CD4-positive, alpha-beta memory T cell (primary cell): ENCODE measurements at regions of chr3 and their contacts with region 1.

Region 1: GRCh38 chr3:4712143-4712542 is 219.0 kb downstream of the ITPR1 start:
- DNase-seq: no peak
- H3K4me3 ChIP-seq: no peak overlapping the region
- H3K4me3 Mint-ChIP-seq: no peak overlapping the region
- H3K27ac ChIP-seq: no peak overlapping the region
- H3K27ac Mint-ChIP-seq: no peak overlapping the region
- H3K4me1 ChIP-seq: no peaks in the 10 kb centered on the region
- H3K4me1 Mint-ChIP-seq: peaks cover 0 to 5% (median under 1%) of the 10 kb centered on the region in 4 donors
- H3K27me3 ChIP-seq: no peaks in the 10 kb centered on the region
- H3K27me3 Mint-ChIP-seq: no peaks in the 10 kb centered on the region

Region 2: DNA sequence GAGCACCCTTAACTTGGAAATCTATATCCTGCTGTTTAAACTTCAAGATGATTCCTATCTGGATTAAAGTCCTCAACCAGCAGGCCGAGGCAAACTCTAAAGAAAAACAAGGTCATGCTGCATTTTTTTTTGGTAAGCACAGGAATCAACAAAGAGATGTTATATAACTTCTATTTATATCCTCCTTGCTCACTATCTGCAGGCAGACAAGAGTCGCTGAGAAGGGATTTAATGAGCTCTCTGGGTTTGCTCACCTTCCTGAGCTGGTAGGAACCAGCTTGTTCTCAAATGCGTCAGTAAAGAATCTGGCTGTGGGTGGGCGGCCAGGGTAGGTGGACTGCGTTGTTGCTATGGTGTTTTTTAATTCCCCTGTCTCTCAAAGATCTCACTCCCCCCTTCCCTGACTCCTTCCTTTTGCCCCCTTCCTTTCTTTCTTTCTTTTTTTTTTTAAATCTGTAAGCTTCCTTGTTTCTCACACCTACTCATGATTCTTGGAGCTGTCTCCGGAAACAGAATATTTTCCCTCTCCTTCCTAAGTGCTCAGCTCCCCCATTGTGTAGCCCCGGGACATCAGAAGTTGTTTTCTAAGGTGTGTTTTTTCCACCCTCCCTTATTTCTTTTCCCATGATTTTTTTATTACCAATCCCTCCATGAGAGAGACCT is 38.3 kb after region 1 on chr3:
- CTCF ChIA-PET with region 1: interaction called, 12 read pairs
- POLR2A ChIA-PET with region 1: no interaction called
- intact Hi-C with region 1: no loop called
- DNase-seq: peak; percentile 34 to 79 (median 68)
- H3K4me3 ChIP-seq: no peak overlapping the region
- H3K4me3 Mint-ChIP-seq: peak overlapping the region in 7 of 8 donors; percentile 14 to 76 (median 44)
- H3K27ac ChIP-seq: peak overlapping the region; percentile 50
- H3K27ac Mint-ChIP-seq: peak overlapping the region; percentile 75 to 96 (median 95)
- H3K4me1 ChIP-seq: peaks cover 27% of the 10 kb centered on the region
- H3K4me1 Mint-ChIP-seq: peaks cover 18 to 48% (median 27%) of the 10 kb centered on the region in 4 donors
- H3K27me3 ChIP-seq: no peaks in the 10 kb centered on the region
- H3K27me3 Mint-ChIP-seq: no peaks in the 10 kb centered on the region

Region 3: GRCh38 chr3:4826237-4827100 is 114.3 kb after region 1 on chr3:
- CTCF ChIA-PET with region 1: interaction called, 19 read pairs
- POLR2A ChIA-PET with region 1: no interaction called
- intact Hi-C with region 1: loop called (anchors 5 kb)
- DNase-seq: no peak
- H3K4me3 ChIP-seq: peak overlapping the region; percentile 4 to 39
- H3K4me3 Mint-ChIP-seq: peak overlapping the region; percentile 74 to 94 (median 88)
- H3K27ac ChIP-seq: peak overlapping the region; percentile 33
- H3K27ac Mint-ChIP-seq: peak overlapping the region; percentile 88 to 98 (median 96)
- H3K4me1 ChIP-seq: peaks cover 99% of the 10 kb centered on the region
- H3K4me1 Mint-ChIP-seq: peaks cover 77 to 97% (median 93%) of the 10 kb centered on the region in 4 donors
- H3K27me3 ChIP-seq: no peaks in the 10 kb centered on the region
- H3K27me3 Mint-ChIP-seq: peaks cover 0 to 3% of the 10 kb centered on the region in 2 donors

Region 4: DNA sequence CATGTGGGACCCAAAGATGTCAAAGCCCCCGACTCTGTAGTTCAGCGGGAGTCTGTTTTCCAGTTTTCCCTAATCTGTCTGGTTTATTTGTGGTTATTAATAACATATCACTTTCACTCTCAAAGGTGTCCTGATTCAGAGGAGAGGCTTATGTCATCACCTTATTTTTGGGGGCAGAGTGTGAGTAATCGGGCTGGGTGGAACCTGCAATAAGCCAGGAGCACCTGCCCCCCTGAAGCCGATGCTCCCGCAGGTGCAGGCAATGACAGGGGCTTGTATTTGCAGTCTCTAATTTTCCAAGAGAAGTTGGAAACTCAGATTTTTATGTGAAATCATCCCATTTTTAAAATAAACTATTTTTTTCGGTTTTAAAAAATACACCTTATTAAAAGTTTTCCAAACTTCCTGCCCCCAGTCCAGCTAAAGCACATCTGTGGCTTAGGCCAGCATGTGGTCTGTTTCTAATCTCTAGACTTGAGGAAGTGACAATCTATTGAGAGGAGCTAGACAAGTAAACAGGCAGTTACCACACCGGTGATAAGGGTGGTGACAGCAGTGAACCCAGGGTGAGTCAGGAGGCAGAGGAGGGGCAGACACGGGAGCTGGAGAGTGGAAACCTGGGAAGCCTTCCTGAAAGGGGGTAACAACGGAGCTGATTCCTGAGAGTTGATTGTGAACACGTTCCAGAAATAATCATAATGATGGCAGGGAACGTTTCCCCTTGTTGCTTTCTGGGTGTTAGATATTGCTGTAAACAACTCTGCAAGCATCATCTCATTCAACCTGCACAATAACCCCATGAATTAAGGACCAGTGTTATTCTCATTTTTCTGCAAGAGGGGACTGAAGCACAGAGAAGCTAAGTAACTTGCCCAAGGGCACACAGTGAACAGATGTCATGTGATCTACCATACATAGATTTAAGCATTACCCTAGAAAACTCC is 304.3 kb after region 1 on chr3:
- CTCF ChIA-PET with region 1: interaction called, 221 read pairs
- POLR2A ChIA-PET with region 1: interaction called, 3 read pairs
- intact Hi-C with region 1: no loop called
- DNase-seq: peak; percentile 32 to 78 (median 48)
- H3K4me3 ChIP-seq: no peak overlapping the region
- H3K4me3 Mint-ChIP-seq: peak overlapping the region; percentile 1 to 76 (median 61)
- H3K27ac ChIP-seq: no peak overlapping the region
- H3K27ac Mint-ChIP-seq: peak overlapping the region; percentile 82 to 97 (median 91)
- H3K4me1 ChIP-seq: peaks cover 71% of the 10 kb centered on the region
- H3K4me1 Mint-ChIP-seq: peaks cover 51 to 82% (median 67%) of the 10 kb centered on the region in 4 donors
- H3K27me3 ChIP-seq: no peaks in the 10 kb centered on the region
- H3K27me3 Mint-ChIP-seq: no peaks in the 10 kb centered on the region

Region 5: DNA sequence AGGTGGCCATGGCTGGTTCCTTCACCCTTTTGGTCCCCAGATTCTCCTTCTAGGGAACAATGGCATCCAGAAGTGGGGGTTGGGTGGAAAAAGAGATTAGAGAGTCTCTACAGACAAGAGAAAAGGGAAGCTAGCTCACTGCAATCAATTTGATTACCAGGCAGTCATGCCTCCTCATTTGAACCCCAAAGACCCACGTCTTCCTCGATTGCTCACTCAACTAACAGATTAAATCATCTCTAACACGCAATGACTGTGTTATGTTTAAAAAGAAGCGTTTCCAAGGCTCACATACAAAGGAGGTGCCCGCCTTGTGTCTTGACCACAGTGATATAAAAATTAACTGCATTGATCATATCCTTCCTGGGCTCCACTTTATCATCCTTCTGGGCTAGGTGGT is 324.7 kb after region 1 on chr3:
- CTCF ChIA-PET with region 1: interaction called, 221 read pairs
- POLR2A ChIA-PET with region 1: no interaction called
- intact Hi-C with region 1: no loop called
- DNase-seq: no peak
- H3K4me3 ChIP-seq: no peak overlapping the region
- H3K4me3 Mint-ChIP-seq: no peak overlapping the region
- H3K27ac ChIP-seq: no peak overlapping the region
- H3K27ac Mint-ChIP-seq: no peak overlapping the region
- H3K4me1 ChIP-seq: no peaks in the 10 kb centered on the region
- H3K4me1 Mint-ChIP-seq: peaks cover 0 to 3% (median 0%) of the 10 kb centered on the region in 4 donors
- H3K27me3 ChIP-seq: no peaks in the 10 kb centered on the region
- H3K27me3 Mint-ChIP-seq: no peaks in the 10 kb centered on the region

Region 6: DNA sequence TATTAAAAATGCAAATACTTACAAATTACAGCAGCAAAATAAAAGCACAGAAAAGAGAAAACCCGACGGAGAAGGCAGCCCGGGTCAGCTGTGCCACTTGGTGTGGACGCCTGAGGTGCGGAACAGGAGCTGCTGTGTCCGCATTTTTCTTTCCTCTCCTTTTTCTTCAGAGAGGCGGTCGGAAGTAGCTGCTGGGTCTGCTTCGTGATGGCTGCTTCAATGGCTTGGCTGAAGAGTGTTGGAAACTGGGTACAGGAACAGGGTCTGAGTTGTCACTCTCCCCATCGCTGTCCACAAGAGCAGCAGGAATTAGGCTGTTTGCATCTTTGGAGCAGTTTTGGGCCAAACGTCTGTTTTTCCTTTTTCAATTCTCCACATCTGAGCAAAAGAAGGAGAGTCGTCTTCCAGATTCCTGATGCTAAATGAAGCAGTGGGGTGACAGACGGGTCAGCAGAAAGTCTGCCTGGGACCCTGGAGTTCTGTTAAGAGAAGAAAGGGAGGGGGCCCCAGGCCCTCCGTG is 356.4 kb after region 1 on chr3:
- CTCF ChIA-PET with region 1: interaction called, 18 read pairs
- POLR2A ChIA-PET with region 1: no interaction called
- intact Hi-C with region 1: no loop called
- DNase-seq: no peak
- H3K4me3 ChIP-seq: no peak overlapping the region
- H3K4me3 Mint-ChIP-seq: no peak overlapping the region
- H3K27ac ChIP-seq: no peak overlapping the region
- H3K27ac Mint-ChIP-seq: no peak overlapping the region
- H3K4me1 ChIP-seq: no peaks in the 10 kb centered on the region
- H3K4me1 Mint-ChIP-seq: no peaks in the 10 kb centered on the region
- H3K27me3 ChIP-seq: no peaks in the 10 kb centered on the region
- H3K27me3 Mint-ChIP-seq: peaks cover 2 to 9% of the 10 kb centered on the region in 2 donors